ENCODE measurements at regions of chr1 and their contacts with region 1.

Region 1: GRCh38 chr1:226634166-226634588 is 85.6 kb downstream of the STUM start:
- DNase-seq: peak; percentile 92
- ATAC-seq: peak; percentile 89

Region 2: DNA sequence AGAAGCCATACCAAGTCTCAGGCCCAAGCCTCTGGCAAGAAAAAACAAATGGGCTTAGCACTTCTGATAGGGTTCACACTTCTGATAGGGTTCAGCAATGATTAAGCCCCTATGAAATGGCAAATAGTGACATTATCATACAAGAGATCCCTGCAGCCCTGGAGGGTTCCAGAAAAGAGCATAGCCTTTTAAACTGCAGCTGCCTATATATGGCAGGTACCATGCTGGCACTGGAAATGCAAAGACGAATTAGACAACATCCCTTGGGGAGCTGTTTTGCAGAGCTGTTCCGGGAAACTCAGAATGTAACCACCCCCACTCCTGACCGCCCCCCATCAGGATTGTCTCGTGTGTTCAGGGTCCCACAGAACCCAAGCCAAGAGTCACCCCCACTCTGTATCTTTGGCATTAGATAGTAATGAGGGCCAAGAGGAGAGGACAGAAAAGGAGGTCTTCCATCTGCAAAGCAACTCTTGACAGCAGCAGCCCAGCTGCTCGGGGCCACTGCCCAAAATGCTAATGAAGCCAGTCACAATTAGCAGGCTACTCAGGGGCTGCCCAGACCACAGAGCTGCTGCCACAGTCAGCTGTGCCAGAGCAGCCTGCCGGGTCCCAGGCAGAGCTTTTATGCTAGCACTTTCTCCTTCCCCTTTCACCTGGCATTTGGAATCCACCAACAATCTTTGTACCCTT is 54.0 kb after region 1 on chr1:
- intact Hi-C with region 1: loop called (anchors 2 kb)
- DNase-seq: no peak
- ATAC-seq: no peak

Region 3: GRCh38 chr1:226827968-226828513 is 193.9 kb after region 1 on chr1:
- intact Hi-C with region 1: loop called (anchors 2 kb)
- DNase-seq: peak; percentile 96
- ATAC-seq: peak; percentile 99